ENCODE measurements at regions of chr10 and their contacts with region 1.

Region 1: DNA sequence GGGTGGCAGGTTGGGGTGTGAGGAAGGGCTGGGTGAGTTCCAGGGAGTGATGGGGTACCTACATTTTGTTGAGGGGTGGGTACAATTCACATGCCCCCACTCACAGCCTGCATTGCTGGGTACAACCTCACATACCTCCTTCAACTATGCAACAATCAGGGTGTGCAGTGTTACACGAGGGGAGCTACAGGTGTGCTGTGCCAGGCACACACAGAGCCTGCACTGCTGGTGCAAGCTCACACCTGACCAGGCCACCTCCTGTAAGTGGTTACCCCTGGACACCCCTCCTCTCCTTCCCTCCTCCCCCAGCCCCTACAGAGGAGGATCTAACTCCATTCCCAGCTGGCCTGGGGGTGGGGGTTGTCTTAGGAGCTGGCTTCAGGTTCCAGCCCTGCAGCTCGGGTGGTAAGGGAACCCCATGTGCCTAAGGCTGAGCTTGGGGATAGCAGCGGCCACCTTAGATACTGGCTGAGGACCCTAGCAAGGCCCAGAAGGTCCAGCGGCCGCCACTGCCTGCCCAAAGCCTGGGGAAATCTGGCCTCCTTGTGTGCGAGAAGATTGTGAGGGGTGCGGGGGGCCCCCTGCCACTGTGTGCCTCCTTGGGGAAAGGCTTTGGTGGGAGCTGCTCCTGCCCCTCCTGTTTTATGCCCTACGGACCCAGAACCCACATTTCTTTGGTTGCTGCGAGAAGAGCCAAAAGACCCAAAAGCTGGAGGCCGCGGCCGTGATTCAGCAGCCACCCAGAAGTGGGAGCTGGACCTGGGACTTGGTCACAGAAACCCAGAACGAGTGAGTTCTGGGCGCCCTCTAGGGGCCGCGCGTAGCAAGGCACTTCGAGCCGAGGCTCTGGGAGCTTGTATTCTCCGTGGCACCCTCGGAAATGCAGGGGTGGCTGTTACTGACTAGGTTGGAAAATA is 10.8 kb downstream of the TLX1 start:
- DNase-seq: peak; percentile 88
- CTCF ChIP-seq: peak; percentile 96

Region 2: DNA sequence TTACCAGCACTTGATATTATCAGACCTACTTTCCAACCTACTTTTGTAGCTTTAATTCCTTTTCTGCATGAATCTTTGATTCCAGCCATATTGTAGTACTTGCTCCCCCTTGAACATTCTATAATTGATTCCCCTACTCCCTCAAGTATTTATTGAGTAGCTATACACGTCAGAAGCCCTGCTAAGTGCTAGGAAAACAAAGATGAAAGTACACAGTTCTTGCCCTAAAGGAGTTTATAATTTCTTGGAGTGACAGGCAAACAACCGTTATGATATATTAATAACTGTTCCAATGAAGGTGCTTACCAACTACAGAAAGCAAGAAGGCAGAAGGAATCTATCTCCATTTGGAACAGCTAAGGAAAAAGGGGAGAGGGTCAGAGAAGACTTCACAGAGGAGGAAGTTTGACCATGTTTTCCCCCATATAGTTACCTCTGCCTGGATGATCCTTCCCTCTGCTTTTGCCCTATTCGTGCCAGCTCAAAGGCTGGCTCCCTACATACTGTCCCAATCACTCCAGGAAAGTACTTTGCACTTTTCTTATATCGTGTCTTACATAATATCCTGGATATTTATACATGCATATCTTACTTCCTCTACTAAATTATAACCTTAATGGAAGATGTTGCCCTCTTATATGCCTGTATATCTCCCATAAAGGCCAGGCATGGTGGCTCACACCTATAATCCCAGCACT is 740.1 kb before region 1 on chr10:
- CTCF ChIA-PET with region 1: no interaction called
- POLR2A ChIA-PET with region 1: no interaction called
- DNase-seq: no peak
- CTCF ChIP-seq: no peak

Region 3: GRCh38 chr10:100625816-100626215 is 516.1 kb before region 1 on chr10:
- CTCF ChIA-PET with region 1: no interaction called
- POLR2A ChIA-PET with region 1: no interaction called
- DNase-seq: no peak
- CTCF ChIP-seq: no peak

Region 4: GRCh38 chr10:101042667-101043355 is 99.1 kb before region 1 on chr10:
- CTCF ChIA-PET with region 1: interaction called, 55 read pairs
- POLR2A ChIA-PET with region 1: no interaction called
- DNase-seq: peak; percentile 95
- CTCF ChIP-seq: no peak

Region 5: DNA sequence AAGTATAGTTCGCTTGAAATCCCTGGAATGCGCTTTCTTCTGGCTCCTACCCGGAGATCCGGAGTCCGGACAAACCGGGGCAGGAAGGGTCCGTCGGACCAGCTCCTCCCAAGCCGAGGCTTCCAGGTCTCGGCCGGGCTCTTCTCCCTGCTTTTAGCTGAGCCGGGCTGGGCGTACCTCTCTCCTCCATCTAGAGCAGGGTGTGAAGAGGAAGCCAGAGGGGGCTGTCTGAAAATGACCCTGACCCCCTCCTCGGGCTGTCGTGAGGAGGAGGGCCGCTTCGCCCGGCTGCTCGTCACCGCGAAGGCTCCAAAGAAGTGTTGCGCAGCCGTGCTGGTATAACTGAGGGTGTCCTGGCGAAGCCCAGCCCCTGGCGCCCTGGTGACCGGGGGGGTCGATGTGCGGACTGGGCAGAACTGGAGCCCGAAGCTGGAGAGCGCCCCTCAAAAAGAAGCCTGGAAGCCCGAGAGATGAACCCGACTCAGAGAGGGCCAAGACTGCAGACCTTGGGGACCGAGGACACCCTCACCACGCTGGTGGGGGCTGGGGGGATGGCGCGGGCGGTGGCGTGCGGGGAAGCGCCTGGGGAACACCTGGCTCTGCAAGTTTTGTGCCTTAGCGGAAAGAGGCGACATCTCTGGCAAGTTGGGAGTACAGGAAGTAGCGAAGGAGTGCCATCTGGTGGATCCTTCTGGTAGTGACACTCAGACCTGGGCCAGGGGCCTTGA is 74.4 kb before region 1 on chr10:
- CTCF ChIA-PET with region 1: interaction called, 10 read pairs
- POLR2A ChIA-PET with region 1: no interaction called
- DNase-seq: peak; percentile 84
- CTCF ChIP-seq: peak; percentile 78

Region 6: DNA sequence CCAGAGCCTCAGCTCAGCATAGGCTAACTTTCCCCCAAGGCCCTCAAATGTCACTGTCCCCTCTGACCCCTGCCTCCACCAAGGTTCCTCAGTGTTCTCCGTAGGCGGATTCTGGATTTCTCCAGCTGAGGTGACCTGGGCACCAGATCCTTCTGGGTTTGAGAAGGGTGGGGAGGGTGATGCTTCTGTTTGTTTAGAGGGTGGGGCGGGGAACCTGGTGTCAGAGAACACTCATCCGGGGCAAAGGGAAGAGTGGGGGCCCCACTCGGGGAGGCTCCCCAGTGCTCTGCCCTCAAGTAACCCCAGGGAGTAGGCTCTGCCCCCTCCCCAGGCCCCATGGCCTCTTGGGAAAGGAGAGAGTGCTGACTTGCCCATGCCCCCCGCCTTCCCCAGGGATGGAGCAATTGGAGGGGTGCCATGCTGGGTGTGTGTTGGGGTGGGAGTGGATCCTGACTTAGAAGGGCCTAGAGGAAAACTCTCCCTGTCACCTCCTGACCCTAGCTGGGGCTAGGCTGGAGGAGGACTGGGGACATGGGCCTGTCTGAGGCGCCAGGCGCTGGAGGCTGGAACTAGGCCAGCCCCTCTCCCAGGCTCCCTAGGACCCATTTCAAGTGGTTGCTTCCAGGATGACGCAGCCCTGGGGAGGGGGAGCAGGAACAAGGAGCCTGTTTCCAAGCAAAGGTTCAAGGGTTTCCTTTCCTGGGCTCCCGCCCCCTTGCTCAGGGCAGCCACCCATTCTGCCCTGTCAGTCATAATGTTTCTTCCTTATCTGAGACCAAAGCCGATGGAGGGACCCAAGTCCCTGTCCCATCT is 52.2 kb before region 1 on chr10:
- CTCF ChIA-PET with region 1: interaction called, 385 read pairs
- POLR2A ChIA-PET with region 1: no interaction called
- DNase-seq: no peak
- CTCF ChIP-seq: no peak

Region 7: DNA sequence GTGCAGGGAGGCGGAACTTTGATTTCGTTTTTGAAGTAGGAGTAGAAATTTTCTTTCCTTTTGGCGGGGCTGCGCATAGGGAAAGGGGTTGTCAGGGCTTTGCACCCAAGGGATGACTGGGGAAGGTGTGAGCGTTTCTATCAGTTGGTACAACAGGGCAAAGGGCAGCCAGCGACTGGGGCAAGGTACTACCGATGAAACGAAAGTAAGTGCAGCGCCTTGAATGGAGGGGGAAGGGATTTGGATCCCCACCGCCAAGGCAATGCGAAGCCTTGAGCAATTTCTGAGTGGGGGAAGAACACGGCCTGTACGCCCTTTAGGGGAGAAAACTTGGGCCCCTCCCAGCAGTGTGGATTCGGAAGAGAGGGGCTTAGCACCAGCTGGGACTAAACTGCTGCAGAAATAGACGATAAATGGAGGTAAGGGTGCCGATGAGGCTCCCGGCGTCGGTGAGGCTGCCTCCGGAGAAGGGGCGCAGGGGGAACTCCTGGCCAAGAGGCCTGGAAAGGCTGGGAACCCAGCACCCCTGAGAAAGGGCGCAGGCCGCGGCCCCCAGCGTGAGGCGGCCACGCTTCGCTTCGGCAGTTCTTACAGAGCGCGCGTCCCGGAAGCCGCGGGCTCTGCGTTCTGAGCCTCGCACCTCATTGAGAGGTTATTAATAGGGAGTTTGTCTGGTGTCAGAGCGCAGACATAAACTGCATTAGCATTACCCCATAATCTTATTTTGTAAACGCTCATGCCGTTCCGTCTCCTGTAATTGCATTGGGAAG is 20.8 kb before region 1 on chr10:
- CTCF ChIA-PET with region 1: interaction called, 60 read pairs
- POLR2A ChIA-PET with region 1: no interaction called
- DNase-seq: peak; percentile 64
- CTCF ChIP-seq: no peak

Region 8: GRCh38 chr10:101161494-101162299 is 19.8 kb after region 1 on chr10:
- CTCF ChIA-PET with region 1: interaction called, 76 read pairs
- POLR2A ChIA-PET with region 1: no interaction called
- DNase-seq: peak; percentile 81
- CTCF ChIP-seq: peak; percentile 95

Measured in GM10248 (cell line).